H1 (cell line): ENCODE measurements at regions of chr9 and their contacts with region 1.

Region 1: GRCh38 chr9:33816327-33817252 is at the start of gene UBE2R2:
- DNase-seq: peak; percentile 60 to 86
- H3K4me3 ChIP-seq: peak within 1 kb of the TSS; percentile 85 to 97 (median 92)
- H3K27ac ChIP-seq: peak within 1 kb of the TSS; percentile 97
- H3K4me1 ChIP-seq: peaks cover 0 to 8% (median 5%) of the 10 kb centered on the region in 4 experiments; a peak in 6 of 7 replicates
- H3K27me3 ChIP-seq: no peaks in the 10 kb centered on the region
- CTCF ChIP-seq: no peak
- EP300 ChIP-seq: no peak
- POLR2A ChIP-seq: peak; percentile 68 to 86
- RAD21 ChIP-seq: no peak
- total RNA-seq, gene UBE2R2: 42.1 and 42.4 TPM in 2 replicates

Region 2: GRCh38 chr9:33737811-33738606 is 78.6 kb before region 1 on chr9:
- CTCF ChIA-PET with region 1: interaction called, 14 read pairs
- POLR2A ChIA-PET with region 1: no interaction called
- DNase-seq: peak in 1 of 2 experiments; percentile 65
- H3K4me3 ChIP-seq: no peak overlapping the region
- H3K27ac ChIP-seq: no peak overlapping the region
- H3K4me1 ChIP-seq: no peaks in the 10 kb centered on the region
- H3K27me3 ChIP-seq: no peaks in the 10 kb centered on the region
- CTCF ChIP-seq: peak; percentile 57 to 96 (median 83)
- EP300 ChIP-seq: no peak
- POLR2A ChIP-seq: no peak
- RAD21 ChIP-seq: peak; percentile 82 to 86

Region 3: DNA sequence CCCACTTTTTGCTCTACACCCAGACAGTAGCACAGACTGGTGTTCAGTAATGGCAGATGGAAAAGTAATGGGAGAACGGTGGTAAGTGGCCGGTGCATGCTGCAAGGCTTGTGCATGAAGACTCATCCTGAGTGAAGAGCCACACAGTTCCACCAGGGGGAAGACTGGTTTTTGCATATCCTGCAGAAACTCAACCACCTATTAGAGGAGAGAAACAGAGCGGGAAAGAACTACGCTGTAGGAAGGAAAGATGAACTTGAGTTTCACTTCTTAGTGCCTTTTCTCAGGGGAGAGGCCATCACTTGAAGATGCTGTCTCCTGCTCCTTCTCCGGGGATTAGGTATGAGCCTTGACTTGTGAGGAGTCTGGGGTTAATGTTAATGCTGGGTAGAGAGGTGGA is 30.7 kb before region 1 on chr9:
- CTCF ChIA-PET with region 1: interaction called, 16 read pairs
- POLR2A ChIA-PET with region 1: no interaction called
- DNase-seq: no peak
- H3K4me3 ChIP-seq: no peak overlapping the region
- H3K27ac ChIP-seq: no peak overlapping the region
- H3K4me1 ChIP-seq: no peaks in the 10 kb centered on the region
- H3K27me3 ChIP-seq: no peaks in the 10 kb centered on the region
- CTCF ChIP-seq: peak; percentile 23 to 31 (median 26); a peak in 3 of 4 replicates
- EP300 ChIP-seq: no peak
- POLR2A ChIP-seq: no peak
- RAD21 ChIP-seq: peak in 1 of 2 experiments; percentile 32; a peak in 2 of 4 replicates

Region 4: DNA sequence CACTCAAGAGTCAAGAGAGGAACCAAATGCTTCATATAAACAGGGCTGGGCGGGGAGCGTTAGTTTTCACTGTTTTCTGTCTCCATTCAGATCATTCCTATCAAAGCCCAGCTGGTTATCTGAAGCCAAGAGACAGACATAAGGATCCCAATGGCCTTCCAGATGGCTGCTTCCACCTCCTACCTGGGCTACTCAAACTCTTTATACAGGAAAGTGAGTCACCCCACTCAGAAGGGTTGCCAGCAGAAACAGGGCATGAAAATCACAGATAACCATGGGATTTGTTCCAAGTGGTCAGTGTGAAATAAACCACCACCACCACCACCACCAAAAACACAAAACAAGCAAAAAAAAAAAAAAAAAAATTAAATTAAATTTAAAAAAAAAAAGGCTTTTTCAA is 15.7 kb before region 1 on chr9:
- CTCF ChIA-PET with region 1: interaction called, 22 read pairs
- POLR2A ChIA-PET with region 1: interaction called, 4 read pairs
- DNase-seq: no peak
- H3K4me3 ChIP-seq: no peak overlapping the region
- H3K27ac ChIP-seq: no peak overlapping the region
- H3K4me1 ChIP-seq: peaks cover 2 to 5% (median 2%) of the 10 kb centered on the region in 4 experiments; a peak in 6 of 7 replicates
- H3K27me3 ChIP-seq: no peaks in the 10 kb centered on the region
- CTCF ChIP-seq: no peak
- EP300 ChIP-seq: no peak
- POLR2A ChIP-seq: no peak
- RAD21 ChIP-seq: no peak

Region 5: GRCh38 chr9:33852216-33852826 is 35.7 kb after region 1 on chr9:
- CTCF ChIA-PET with region 1: interaction called, 27 read pairs
- POLR2A ChIA-PET with region 1: interaction called, 9 read pairs
- DNase-seq: peak; percentile 5 to 55
- H3K4me3 ChIP-seq: no peak overlapping the region
- H3K27ac ChIP-seq: no peak overlapping the region
- H3K4me1 ChIP-seq: peaks cover 0 to 6% (median 2%) of the 10 kb centered on the region in 4 experiments; a peak in 4 of 7 replicates
- H3K27me3 ChIP-seq: no peaks in the 10 kb centered on the region
- CTCF ChIP-seq: peak; percentile 20 to 61 (median 57)
- EP300 ChIP-seq: no peak
- POLR2A ChIP-seq: no peak
- RAD21 ChIP-seq: peak; percentile 59 to 72; a peak in 3 of 4 replicates